ENCODE measurements at regions of chr11 and their contacts with region 1.

Region 1: DNA sequence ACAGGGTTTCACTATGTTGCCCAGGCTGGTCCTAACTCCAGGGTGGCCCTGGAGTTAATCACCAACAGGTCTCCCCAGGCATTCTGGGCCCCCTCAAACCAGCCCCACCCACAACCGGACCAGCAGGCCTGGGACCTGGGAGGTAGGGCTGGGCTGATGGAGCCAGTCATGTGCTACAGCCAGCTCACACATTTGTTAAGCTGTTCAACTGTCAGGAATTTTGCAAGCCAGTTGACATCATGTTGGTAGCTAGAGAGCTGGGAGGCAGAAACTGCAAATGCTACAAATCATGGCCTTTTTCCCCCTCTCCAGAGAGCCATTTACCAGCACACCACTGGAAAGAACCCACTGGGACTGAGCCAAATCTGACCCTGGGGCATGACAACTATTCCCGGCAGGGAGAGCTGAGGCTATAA is 6.8 kb downstream of the ARHGAP1 start:
- DNase-seq: no peak
- H3K4me3 ChIP-seq: peak overlapping the region in 15 of 59 donors; percentile 2 to 99 (median 31)
- H3K27ac ChIP-seq: peak overlapping the region; percentile 49 to 99 (median 96)
- H3K27me3 ChIP-seq: no peaks in the 10 kb centered on the region
- CTCF ChIP-seq: no peak

Region 2: DNA sequence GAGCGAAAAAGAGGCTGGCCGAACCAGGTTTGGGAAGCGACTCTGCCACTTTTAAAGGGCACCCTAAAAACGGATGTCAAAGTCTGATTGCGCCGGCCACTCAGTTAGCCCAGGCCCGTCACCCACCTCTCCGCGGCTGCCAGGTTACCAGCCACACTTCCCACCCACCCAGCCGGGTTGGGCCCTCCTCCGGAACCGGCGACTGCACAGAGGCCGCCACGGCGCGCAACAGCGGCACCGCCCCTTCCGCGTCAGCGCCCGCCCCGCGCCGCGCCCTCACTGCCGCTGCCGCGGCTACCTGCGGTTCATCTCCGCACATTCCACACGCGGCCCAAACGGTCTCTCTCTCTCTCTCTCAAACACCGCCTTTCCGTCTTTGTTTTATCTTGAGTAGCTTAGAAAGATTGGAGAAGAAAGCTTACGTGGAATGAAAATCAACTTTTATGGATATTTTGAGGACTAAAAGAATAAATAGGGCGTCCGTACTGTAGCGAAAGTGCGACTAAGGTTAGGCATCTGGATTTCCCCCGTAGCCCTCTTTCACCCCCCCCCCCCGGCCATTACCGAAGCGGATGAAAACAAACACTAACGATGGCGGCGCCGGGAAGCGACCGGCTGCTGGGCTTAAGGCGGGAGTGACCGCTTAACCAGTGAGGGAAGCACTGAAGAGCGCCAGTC is 76.5 kb before region 1 on chr11 and contains the starts of genes ATG13 and HARBI1:
- intact Hi-C with region 1: loop called (anchors 2 to 5 kb)
- DNase-seq: peak; percentile 75 to 94 (median 88)
- H3K4me3 ChIP-seq: peak within 1 kb of the TSS; percentile 47 to 100 (median 99)
- H3K27ac ChIP-seq: peak within 1 kb of the TSS; percentile 79 to 99 (median 97)
- H3K27me3 ChIP-seq: no peaks in the 10 kb centered on the region
- CTCF ChIP-seq: peak in 5 of 56 donors; percentile 11 to 23 (median 12)
- total RNA-seq, gene ATG13: 107 to 201 (median 150) TPM
- total RNA-seq, gene HARBI1: 4.5 to 29.2 (median 8.0) TPM

Region 3: GRCh38 chr11:46649180-46649738 is 44.3 kb before region 1 on chr11:
- intact Hi-C with region 1: loop called (anchors 2 kb)
- DNase-seq: peak in 5 of 10 donors; percentile 44 to 78 (median 63)
- H3K4me3 ChIP-seq: peak overlapping the region in 14 of 59 donors; percentile 0 to 27 (median 10)
- H3K27ac ChIP-seq: peak overlapping the region; percentile 78 to 100 (median 95)
- H3K27me3 ChIP-seq: no peaks in the 10 kb centered on the region
- CTCF ChIP-seq: peak in 7 of 56 donors; percentile 3 to 19 (median 14)

Region 4: DNA sequence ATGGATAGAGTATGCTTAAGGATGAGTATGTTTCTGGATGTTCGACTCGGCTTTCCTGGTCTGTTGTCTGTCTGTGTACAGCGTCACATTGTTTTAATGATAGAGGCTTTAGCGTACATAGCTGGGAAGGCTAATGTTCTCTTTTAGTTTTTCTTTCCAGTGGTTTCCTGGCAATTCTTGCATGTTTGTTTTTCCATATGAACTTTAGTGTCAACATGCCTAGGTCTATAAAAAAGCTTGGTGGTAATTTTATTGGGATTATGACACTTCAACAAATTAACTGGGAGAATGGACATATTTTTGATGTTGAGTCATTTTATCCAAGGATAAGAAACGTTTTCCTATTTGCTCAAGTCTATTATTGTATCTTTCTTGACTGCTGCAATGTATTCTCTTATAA is 43.0 kb after region 1 on chr11:
- intact Hi-C with region 1: no loop called
- DNase-seq: no peak
- H3K4me3 ChIP-seq: no peak overlapping the region
- H3K27ac ChIP-seq: no peak overlapping the region
- H3K27me3 ChIP-seq: no peaks in the 10 kb centered on the region
- CTCF ChIP-seq: no peak

Region 5: GRCh38 chr11:46906609-46907041 is 213.0 kb after region 1 on chr11:
- intact Hi-C with region 1: loop called (anchors 2 to 5 kb)
- DNase-seq: peak in 3 of 10 donors; percentile 47 to 66 (median 58)
- H3K4me3 ChIP-seq: peak overlapping the region in 8 of 59 donors; percentile 9 to 31 (median 13)
- H3K27ac ChIP-seq: peak overlapping the region; percentile 13 to 99 (median 87)
- H3K27me3 ChIP-seq: peaks cover 0 to 6% (median 0%) of the 10 kb centered on the region in 45 donors
- CTCF ChIP-seq: peak in 1 of 56 donors; percentile 8